ENCODE measurements at regions of chr19 and their contacts with region 1.

Region 1: DNA sequence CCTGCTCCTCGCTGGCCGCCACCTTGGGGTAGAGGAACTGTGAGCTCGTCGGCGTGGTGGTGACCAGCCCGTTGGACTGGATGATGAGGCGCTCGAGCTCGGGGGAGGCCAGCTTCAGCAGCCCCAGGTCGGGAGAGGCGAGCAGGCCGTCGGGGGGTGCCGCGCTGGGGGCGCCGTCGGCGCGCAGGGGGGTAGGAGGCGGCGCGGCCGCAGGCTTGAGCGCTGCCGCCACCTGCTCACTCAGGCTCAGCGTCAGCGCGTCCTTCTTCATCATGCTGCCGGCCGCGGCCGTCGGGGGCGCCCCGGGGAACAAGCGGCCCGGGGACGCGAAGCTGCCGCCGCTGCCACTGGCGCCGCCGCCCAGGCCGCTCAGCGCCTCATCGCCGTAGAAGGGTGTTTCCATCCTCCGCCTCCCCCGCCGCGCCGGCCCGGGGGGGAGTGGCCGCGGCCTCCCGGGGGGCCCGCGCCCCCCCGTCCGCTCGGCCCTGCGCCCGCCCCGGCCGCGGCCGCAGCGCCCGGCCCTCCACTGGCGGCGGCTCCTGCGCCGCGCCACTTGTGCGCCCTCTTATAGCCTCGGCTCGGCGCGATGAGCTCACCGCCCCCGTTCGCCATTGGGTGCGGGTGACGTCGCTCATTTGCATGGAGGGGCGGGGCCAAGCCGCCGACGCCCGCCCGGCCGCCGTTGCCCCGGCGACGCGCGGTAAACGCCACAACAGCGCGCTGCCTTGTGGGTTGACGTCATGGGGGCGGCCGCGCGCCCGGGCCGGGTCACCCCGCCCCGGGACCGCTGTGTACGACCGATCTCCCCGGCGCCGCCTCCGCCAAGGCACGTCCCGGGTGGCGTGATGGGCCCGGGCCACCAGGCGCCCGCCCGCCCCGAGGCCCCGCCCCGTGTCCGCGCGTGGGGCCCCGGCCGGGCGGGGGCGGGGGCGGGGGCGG is at the start of gene JUND:
- DNase-seq: peak; percentile 98
- ATAC-seq: peak; percentile 69
- H3K4me3 Mint-ChIP-seq: peak within 1 kb of the TSS; percentile 86
- H3K27ac Mint-ChIP-seq: peak within 1 kb of the TSS; percentile 98
- H3K4me1 Mint-ChIP-seq: peaks cover 54% of the 10 kb centered on the region
- H3K27me3 Mint-ChIP-seq: no peaks in the 10 kb centered on the region
- total RNA-seq, gene JUND: 254 to 311 TPM

Region 2: DNA sequence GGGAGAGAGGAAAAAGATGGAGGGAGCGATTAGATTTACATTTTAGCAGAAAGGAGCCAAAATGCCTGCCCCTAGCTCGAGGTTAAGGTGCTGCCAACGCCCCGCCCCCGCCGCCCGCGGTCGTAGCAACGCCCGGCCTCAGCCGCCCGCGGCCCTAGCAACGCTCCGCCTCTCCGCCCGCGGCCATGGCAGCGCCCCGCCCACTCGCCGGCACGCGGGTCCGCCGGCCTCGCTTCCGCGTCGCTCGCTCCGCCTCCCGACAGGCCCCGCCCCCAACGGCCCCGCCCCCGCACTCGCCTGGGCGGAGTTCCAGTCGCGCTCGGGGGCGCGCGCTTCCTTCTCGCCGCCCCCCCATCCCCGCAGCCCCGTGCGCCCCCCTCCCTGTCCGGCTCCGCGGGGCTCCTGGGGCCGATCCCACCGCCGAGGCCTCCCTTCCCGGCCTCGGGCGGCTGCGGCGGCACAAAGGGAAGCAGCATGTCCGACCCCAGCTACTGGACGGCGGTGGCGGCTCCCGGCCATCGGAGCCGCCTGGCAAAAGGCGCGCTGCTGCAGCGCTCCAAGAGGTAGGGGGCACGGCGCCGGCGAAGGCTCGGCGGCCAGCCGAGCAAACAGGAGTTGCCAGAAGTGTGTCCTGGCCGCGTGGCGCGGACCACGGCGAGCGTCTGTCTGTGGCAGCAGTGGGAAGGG is 163.5 kb before region 1 on chr19:
- CTCF ChIA-PET with region 1: no interaction called
- POLR2A ChIA-PET with region 1: no interaction called
- intact Hi-C with region 1: loop called in 1 of 2 experiments (anchors 1 kb)
- DNase-seq: peak; percentile 97
- ATAC-seq: peak; percentile 79
- H3K4me3 Mint-ChIP-seq: peak overlapping the region; percentile 74
- H3K27ac Mint-ChIP-seq: peak overlapping the region; percentile 84
- H3K4me1 Mint-ChIP-seq: peaks cover 35% of the 10 kb centered on the region
- H3K27me3 Mint-ChIP-seq: no peaks in the 10 kb centered on the region

Region 3: GRCh38 chr19:18304458-18305310 is 23.3 kb after region 1 on chr19:
- CTCF ChIA-PET with region 1: interaction called, 81 read pairs
- POLR2A ChIA-PET with region 1: interaction called, 284 read pairs
- intact Hi-C with region 1: loop called (anchors 1 kb)
- DNase-seq: peak; percentile 93
- ATAC-seq: peak; percentile 81
- H3K4me3 Mint-ChIP-seq: peak overlapping the region; percentile 84
- H3K27ac Mint-ChIP-seq: peak overlapping the region; percentile 97
- H3K4me1 Mint-ChIP-seq: peaks cover 50% of the 10 kb centered on the region
- H3K27me3 Mint-ChIP-seq: no peaks in the 10 kb centered on the region

Region 4: DNA sequence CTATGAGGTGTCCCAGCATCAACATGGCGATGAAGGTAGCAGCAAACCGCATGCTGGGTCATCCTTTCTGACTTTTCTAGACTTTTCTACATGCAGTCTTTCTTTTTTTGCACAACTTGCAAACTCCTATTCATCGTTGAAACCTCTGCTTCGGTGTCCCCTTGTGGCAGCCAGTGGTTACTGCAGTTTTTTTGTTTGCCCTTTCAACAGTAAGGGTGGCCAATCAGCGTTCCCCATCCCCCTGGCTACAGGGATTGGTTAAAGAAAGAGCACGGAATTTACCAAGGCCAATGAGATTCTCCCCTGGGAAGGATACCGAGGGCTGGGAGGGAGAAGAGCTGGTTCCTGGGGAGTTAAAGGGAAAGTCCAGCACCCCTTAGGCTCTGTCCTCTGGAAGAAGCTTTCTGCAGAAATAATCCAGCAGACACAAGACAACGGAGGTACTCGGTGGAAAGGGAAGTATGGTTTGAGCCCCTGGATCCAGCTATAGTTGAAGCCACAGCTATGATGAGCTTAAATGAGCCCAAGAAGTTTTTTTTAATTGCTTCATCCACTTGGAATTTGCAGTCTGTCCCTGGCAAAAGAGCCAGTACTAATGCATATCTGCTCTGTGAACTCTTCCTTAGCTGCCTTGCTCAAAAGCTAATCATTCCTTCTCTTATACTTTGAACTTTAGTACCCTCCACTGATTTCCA is 47.1 kb after region 1 on chr19:
- CTCF ChIA-PET with region 1: interaction called, 208 read pairs
- POLR2A ChIA-PET with region 1: interaction called, 42 read pairs
- intact Hi-C with region 1: loop called (anchors 1 kb)
- DNase-seq: peak; percentile 94
- ATAC-seq: peak; percentile 99
- H3K4me3 Mint-ChIP-seq: peak overlapping the region; percentile 65
- H3K27ac Mint-ChIP-seq: peak overlapping the region; percentile 69
- H3K4me1 Mint-ChIP-seq: peaks cover 20% of the 10 kb centered on the region
- H3K27me3 Mint-ChIP-seq: no peaks in the 10 kb centered on the region

Region 5: DNA sequence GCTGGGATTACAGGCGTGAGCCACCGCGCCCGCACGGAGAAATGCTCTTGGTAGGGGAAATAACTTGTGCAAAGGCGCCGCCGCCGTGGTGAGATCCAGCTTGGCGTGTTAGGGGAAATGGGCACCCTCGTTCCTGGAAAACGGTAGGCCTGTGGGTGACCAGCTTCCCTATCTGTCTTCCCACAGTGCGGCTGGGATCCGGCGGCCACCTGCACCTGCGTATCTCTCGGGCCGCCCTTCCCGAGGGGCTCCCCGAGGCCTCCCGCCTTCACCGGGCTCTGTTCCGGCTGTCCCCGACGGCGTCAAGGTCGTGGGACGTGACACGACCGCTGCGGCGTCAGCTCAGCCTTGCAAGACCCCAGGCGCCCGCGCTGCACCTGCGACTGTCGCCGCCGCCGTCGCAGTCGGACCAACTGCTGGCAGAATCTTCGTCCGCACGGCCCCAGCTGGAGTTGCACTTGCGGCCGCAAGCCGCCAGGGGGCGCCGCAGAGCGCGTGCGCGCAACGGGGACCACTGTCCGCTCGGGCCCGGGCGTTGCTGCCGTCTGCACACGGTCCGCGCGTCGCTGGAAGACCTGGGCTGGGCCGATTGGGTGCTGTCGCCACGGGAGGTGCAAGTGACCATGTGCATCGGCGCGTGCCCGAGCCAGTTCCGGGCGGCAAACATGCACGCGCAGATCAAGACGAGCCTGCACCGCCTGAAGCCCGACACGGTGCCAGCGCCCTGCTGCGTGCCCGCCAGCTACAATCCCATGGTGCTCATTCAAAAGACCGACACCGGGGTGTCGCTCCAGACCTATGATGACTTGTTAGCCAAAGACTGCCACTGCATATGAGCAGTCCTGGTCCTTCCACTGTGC is 107.0 kb after region 1 on chr19:
- CTCF ChIA-PET with region 1: interaction called, 11 read pairs
- POLR2A ChIA-PET with region 1: no interaction called
- intact Hi-C with region 1: no loop called
- DNase-seq: peak; percentile 88
- ATAC-seq: peak; percentile 86
- H3K4me3 Mint-ChIP-seq: peak overlapping the region; percentile 67
- H3K27ac Mint-ChIP-seq: no peak overlapping the region
- H3K4me1 Mint-ChIP-seq: peaks cover 4% of the 10 kb centered on the region
- H3K27me3 Mint-ChIP-seq: peaks cover 45% of the 10 kb centered on the region

Region 6: GRCh38 chr19:18419195-18419698 is 137.9 kb after region 1 on chr19 and contains the start of gene SSBP4:
- CTCF ChIA-PET with region 1: interaction called, 3 read pairs
- POLR2A ChIA-PET with region 1: interaction called, 10 read pairs
- intact Hi-C with region 1: loop called in 1 of 2 experiments (anchors 5 kb)
- DNase-seq: peak; percentile 82
- ATAC-seq: peak; percentile 45
- H3K4me3 Mint-ChIP-seq: peak within 1 kb of the TSS; percentile 90
- H3K27ac Mint-ChIP-seq: peak within 1 kb of the TSS; percentile 80
- H3K4me1 Mint-ChIP-seq: peaks cover 79% of the 10 kb centered on the region
- H3K27me3 Mint-ChIP-seq: peaks cover 23% of the 10 kb centered on the region
- total RNA-seq, gene SSBP4: 71.7 to 79.3 TPM

Measured in activated CD4-positive, alpha-beta T cell treated with anti-CD3 and anti-CD28 coated beads for 36 hours (primary cell).